CD8-positive, alpha-beta T cell (primary cell): ENCODE measurements at regions of chr18 and their contacts with region 1.

Region 1: GRCh38 chr18:62522504-62523254 is at the start of gene ZCCHC2:
- DNase-seq: peak; percentile 95 to 100 (median 98)
- ATAC-seq: peak; percentile 77
- H3K4me3 ChIP-seq: peak within 1 kb of the TSS; percentile 88 to 89
- H3K4me3 Mint-ChIP-seq: peak within 1 kb of the TSS; percentile 95
- H3K27ac ChIP-seq: peak within 1 kb of the TSS; percentile 86 to 89
- H3K27ac Mint-ChIP-seq: peak within 1 kb of the TSS; percentile 89
- H3K4me1 ChIP-seq: peaks cover 32% of the 10 kb centered on the region
- H3K4me1 Mint-ChIP-seq: peaks cover 37% of the 10 kb centered on the region
- H3K27me3 ChIP-seq: no peaks in the 10 kb centered on the region
- H3K27me3 Mint-ChIP-seq: no peaks in the 10 kb centered on the region
- CTCF ChIP-seq: no peak
- total RNA-seq, gene ZCCHC2: 88.7 to 90.9 TPM

Region 2: DNA sequence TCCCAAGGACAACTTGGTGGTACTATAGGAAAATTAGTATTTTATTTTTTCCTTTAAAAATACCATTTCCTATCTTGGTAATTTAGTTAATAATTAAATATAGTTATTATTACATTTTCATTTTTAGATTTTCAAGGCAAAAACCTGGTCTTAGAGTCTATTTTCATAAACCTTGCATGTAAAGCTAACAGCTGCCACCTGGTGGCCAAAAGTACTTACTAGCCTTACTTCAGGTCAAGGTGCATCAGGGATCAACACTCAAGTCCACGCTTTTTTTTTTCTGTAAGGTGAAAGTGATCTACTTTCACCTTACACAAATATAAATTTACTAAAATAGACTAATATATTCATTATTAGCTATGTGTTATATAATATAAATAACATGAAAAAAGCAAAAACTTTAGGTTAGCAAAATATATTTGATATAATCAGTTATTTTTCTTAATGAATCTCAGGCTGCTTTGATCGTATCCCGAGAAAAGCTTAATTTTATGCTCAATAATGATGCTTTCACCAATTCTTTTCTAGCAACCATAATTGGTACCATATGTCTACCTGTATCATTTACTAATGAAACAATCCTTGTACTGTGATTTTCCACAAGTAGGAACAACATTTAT is 273.1 kb before region 1 on chr18:
- CTCF ChIA-PET with region 1: no interaction called
- POLR2A ChIA-PET with region 1: no interaction called
- intact Hi-C with region 1: no loop called
- DNase-seq: peak; percentile 44 to 83 (median 74)
- ATAC-seq: peak; percentile 56
- H3K4me3 ChIP-seq: no peak overlapping the region
- H3K4me3 Mint-ChIP-seq: no peak overlapping the region
- H3K27ac ChIP-seq: no peak overlapping the region
- H3K27ac Mint-ChIP-seq: no peak overlapping the region
- H3K4me1 ChIP-seq: no peaks in the 10 kb centered on the region
- H3K4me1 Mint-ChIP-seq: no peaks in the 10 kb centered on the region
- H3K27me3 ChIP-seq: no peaks in the 10 kb centered on the region
- H3K27me3 Mint-ChIP-seq: no peaks in the 10 kb centered on the region
- CTCF ChIP-seq: peak; percentile 90

Region 3: DNA sequence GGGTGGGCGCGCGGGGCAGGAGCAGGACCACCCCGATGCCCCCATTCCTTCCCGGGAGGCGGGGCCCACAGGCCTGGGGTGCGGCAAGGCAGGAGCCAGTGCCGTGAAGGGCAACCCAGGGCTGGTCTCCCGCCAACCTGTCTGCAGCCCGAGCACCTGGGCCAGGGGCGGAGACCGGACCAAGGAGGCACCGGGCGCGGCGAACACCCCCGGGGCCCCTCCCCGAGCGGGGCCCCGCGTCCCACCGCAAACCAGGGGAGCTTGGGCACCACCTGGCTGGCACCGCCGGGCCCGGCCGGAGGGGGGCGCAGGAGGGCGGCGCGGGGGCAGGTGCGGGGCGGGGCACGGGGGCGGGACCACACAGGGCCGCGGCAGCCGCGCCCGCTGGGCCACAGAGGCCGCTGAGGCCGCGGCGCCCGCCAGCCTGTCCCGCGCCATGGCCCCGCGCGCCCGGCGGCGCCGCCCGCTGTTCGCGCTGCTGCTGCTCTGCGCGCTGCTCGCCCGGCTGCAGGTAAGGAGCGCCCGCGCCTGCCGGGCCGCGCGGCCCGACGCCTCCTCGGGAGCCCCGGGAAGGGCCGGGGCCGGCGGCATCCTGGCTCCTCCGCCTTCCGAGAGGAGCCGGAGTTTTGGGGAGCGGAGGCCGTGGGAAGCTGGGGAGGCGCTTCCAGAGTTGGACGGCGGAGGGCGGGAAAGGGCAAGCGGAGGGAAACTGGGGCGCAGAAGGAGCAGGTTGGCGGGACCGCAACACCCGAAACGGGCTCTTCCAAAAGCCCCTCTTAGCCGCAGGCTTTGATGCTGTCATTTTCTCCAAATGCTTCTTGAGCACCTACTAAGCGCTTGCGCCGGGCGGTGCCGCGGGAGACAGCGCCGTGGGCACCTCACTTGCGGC is 197.5 kb before region 1 on chr18 and contains the start of gene TNFRSF11A:
- CTCF ChIA-PET with region 1: no interaction called
- POLR2A ChIA-PET with region 1: no interaction called
- intact Hi-C with region 1: loop called in 1 of 2 experiments (anchors 10 kb)
- DNase-seq: peak; percentile 35 to 69 (median 61)
- ATAC-seq: peak; percentile 90
- H3K4me3 ChIP-seq: peak within 1 kb of the TSS; percentile 45 to 51
- H3K4me3 Mint-ChIP-seq: peak within 1 kb of the TSS; percentile 80
- H3K27ac ChIP-seq: no peak within 1 kb of the TSS
- H3K27ac Mint-ChIP-seq: no peak within 1 kb of the TSS
- H3K4me1 ChIP-seq: peaks cover 24% of the 10 kb centered on the region
- H3K4me1 Mint-ChIP-seq: peaks cover 26% of the 10 kb centered on the region
- H3K27me3 ChIP-seq: peaks cover 25 to 27% of the 10 kb centered on the region in 2 experiments
- H3K27me3 Mint-ChIP-seq: peaks cover 71% of the 10 kb centered on the region
- CTCF ChIP-seq: peak; percentile 25
- total RNA-seq, gene TNFRSF11A: 0.03 to 0.28 TPM

Region 4: DNA sequence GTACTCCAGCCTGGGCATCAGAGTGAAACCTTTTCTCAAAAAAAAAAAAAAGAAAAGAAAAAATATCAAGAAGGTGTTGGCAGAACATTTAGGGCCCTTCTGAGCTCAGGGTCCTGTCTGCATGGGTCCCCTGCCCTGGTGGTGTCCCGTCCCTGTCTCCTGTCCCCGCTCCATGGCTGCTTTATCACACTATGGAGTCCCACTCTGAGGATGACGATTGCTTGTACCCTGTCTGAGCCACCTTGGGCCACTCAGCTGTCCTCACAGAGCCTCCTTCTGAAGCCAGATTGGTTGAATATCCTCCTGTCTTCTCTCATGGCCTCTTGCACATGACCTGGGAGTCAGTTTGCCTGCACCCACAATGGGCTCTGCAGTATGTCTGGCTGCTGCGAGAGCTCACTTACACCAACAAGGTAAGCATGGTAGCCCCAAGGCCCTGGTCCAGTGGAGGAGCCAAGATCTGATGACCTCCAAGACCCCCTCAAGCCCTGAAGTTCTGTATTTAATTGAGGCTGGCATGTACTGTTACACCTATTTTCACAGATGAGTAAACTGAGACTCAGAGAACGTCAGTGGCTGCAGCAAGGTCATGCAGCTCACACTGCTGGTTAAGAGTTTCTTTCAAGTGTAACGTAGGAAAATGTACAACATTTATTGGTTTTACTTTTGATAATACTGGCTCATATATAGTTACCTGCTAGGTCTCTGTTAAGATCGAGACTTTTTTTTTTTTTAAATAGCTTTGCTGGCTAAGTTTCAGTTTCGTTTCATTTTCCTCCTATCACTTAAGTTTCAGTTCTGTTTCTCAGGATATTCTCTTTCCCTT is 16.8 kb before region 1 on chr18:
- CTCF ChIA-PET with region 1: interaction called, 9 read pairs
- POLR2A ChIA-PET with region 1: interaction called, 51 read pairs
- intact Hi-C with region 1: loop called (anchors 1 to 2 kb)
- DNase-seq: peak in 6 of 9 experiments; percentile 7 to 74 (median 48)
- ATAC-seq: peak; percentile 70
- H3K4me3 ChIP-seq: peak overlapping the region; percentile 59 to 71
- H3K4me3 Mint-ChIP-seq: peak overlapping the region; percentile 90
- H3K27ac ChIP-seq: peak overlapping the region; percentile 59 to 79
- H3K27ac Mint-ChIP-seq: peak overlapping the region; percentile 96
- H3K4me1 ChIP-seq: peaks cover 15% of the 10 kb centered on the region
- H3K4me1 Mint-ChIP-seq: peaks cover 20% of the 10 kb centered on the region
- H3K27me3 ChIP-seq: no peaks in the 10 kb centered on the region
- H3K27me3 Mint-ChIP-seq: no peaks in the 10 kb centered on the region
- CTCF ChIP-seq: no peak

Region 5: GRCh38 chr18:62555135-62555534 is 32.5 kb after region 1 on chr18:
- CTCF ChIA-PET with region 1: interaction called, 3 read pairs
- POLR2A ChIA-PET with region 1: no interaction called
- intact Hi-C with region 1: loop called in 1 of 2 experiments (anchors 5 kb)
- DNase-seq: no peak
- ATAC-seq: no peak
- H3K4me3 ChIP-seq: no peak overlapping the region
- H3K4me3 Mint-ChIP-seq: no peak overlapping the region
- H3K27ac ChIP-seq: no peak overlapping the region
- H3K27ac Mint-ChIP-seq: no peak overlapping the region
- H3K4me1 ChIP-seq: no peaks in the 10 kb centered on the region
- H3K4me1 Mint-ChIP-seq: peaks cover 18% of the 10 kb centered on the region
- H3K27me3 ChIP-seq: no peaks in the 10 kb centered on the region
- H3K27me3 Mint-ChIP-seq: no peaks in the 10 kb centered on the region
- CTCF ChIP-seq: no peak

Region 6: GRCh38 chr18:63161761-63162195 is 639.1 kb after region 1 on chr18:
- CTCF ChIA-PET with region 1: no interaction called
- POLR2A ChIA-PET with region 1: no interaction called
- intact Hi-C with region 1: loop called in 1 of 2 experiments (anchors 1 kb)
- DNase-seq: peak; percentile 51 to 94 (median 78)
- ATAC-seq: peak; percentile 85
- H3K4me3 ChIP-seq: peak overlapping the region; percentile 17 to 30
- H3K4me3 Mint-ChIP-seq: peak overlapping the region; percentile 65
- H3K27ac ChIP-seq: peak overlapping the region; percentile 81 to 99
- H3K27ac Mint-ChIP-seq: peak overlapping the region; percentile 98
- H3K4me1 ChIP-seq: peaks cover 77% of the 10 kb centered on the region
- H3K4me1 Mint-ChIP-seq: peaks cover 91% of the 10 kb centered on the region
- H3K27me3 ChIP-seq: no peaks in the 10 kb centered on the region
- H3K27me3 Mint-ChIP-seq: no peaks in the 10 kb centered on the region
- CTCF ChIP-seq: no peak

Region 7: GRCh38 chr18:63367053-63367953 is 844.6 kb after region 1 on chr18 and contains the start of gene KDSR:
- CTCF ChIA-PET with region 1: no interaction called
- POLR2A ChIA-PET with region 1: no interaction called
- intact Hi-C with region 1: loop called in 1 of 2 experiments (anchors 5 kb)
- DNase-seq: peak; percentile 58 to 87 (median 78)
- ATAC-seq: peak; percentile 82
- H3K4me3 ChIP-seq: peak within 1 kb of the TSS; percentile 87 to 89
- H3K4me3 Mint-ChIP-seq: peak within 1 kb of the TSS; percentile 89
- H3K27ac ChIP-seq: peak within 1 kb of the TSS; percentile 63 to 65
- H3K27ac Mint-ChIP-seq: peak within 1 kb of the TSS; percentile 86
- H3K4me1 ChIP-seq: peaks cover 33% of the 10 kb centered on the region
- H3K4me1 Mint-ChIP-seq: peaks cover 45% of the 10 kb centered on the region
- H3K27me3 ChIP-seq: no peaks in the 10 kb centered on the region
- H3K27me3 Mint-ChIP-seq: no peaks in the 10 kb centered on the region
- CTCF ChIP-seq: no peak
- total RNA-seq, gene KDSR: 12.8 to 13.9 TPM

Region 8: DNA sequence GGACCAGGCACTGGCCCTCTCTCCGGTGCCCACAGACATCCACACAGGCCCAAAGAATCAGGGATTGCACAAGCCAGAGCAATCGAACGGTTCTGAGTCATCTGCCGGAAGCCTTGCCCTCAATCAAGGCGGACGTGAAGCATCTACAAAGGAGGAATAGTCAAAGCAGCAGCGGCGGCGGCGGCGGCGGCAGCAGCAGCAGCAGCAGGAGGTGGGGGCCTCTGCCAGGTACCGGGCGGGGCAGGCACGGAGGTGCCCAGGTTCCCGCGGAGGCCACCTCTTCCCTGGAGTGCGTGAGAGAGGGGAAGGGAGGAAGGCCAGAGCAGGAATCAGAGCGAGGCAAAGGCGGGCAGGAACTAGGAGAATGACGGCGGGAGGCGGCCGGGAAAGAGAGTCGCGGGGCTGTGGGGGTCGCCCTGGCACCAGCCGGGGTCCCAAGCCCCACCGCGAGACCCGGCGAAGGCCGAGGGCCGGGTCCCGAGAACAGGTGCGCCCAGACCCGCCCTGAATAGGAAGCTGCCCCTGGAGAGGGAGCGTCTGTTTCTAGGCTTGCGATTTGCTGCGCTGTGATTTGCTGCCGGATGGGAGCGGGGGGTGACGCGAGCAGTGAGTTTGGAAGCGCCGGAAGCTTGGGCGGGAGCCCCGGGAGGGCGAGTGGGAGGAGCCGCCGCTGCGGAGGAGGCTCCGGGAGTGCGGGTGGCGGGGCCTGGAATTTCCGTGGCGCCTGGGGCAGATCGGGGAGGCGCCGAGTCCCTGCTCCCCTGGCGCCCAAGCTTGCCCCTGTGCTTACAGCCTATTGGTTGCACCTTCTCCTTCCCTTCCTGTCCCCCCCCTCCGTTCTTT is 1447.5 kb after region 1 on chr18 and contains the start of gene SERPINB8:
- CTCF ChIA-PET with region 1: no interaction called
- POLR2A ChIA-PET with region 1: no interaction called
- intact Hi-C with region 1: loop called in 1 of 2 experiments (anchors 5 kb)
- DNase-seq: peak; percentile 48 to 88 (median 79)
- ATAC-seq: peak; percentile 87
- H3K4me3 ChIP-seq: peak within 1 kb of the TSS; percentile 68 to 97
- H3K4me3 Mint-ChIP-seq: peak within 1 kb of the TSS; percentile 98
- H3K27ac ChIP-seq: peak within 1 kb of the TSS; percentile 78 to 92
- H3K27ac Mint-ChIP-seq: peak within 1 kb of the TSS; percentile 96
- H3K4me1 ChIP-seq: peaks cover 16% of the 10 kb centered on the region
- H3K4me1 Mint-ChIP-seq: peaks cover 41% of the 10 kb centered on the region
- H3K27me3 ChIP-seq: no peaks in the 10 kb centered on the region
- H3K27me3 Mint-ChIP-seq: no peaks in the 10 kb centered on the region
- CTCF ChIP-seq: no peak
- total RNA-seq, gene SERPINB8: 14.8 to 15.7 TPM